ENCODE measurements at regions of chr5 and their contacts with region 1.

Region 1: GRCh38 chr5:154868702-154869101 is 10.3 kb downstream of the CNOT8 start:
- DNase-seq: no peak
- H3K4me3 ChIP-seq: no peak overlapping the region
- H3K27ac ChIP-seq: no peak overlapping the region
- H3K4me1 ChIP-seq: no peaks in the 10 kb centered on the region
- H3K27me3 ChIP-seq: no peaks in the 10 kb centered on the region; a peak in 1 of 7 replicates
- CTCF ChIP-seq: peak in 2 of 3 experiments; percentile 38 to 39; a peak in 3 of 4 replicates
- EP300 ChIP-seq: no peak
- POLR2A ChIP-seq: no peak
- RAD21 ChIP-seq: peak; percentile 56 to 68

Region 2: GRCh38 chr5:154857530-154858296 is 11.0 kb before region 1 on chr5:
- CTCF ChIA-PET with region 1: interaction called, 4 read pairs
- POLR2A ChIA-PET with region 1: interaction called, 13 read pairs
- DNase-seq: peak; percentile 79 to 93
- H3K4me3 ChIP-seq: peak overlapping the region; percentile 55 to 98 (median 72)
- H3K27ac ChIP-seq: peak overlapping the region; percentile 98
- H3K4me1 ChIP-seq: peaks cover 0 to 9% (median 5%) of the 10 kb centered on the region in 4 experiments; a peak in 6 of 7 replicates
- H3K27me3 ChIP-seq: no peaks in the 10 kb centered on the region
- CTCF ChIP-seq: no peak
- EP300 ChIP-seq: no peak
- POLR2A ChIP-seq: peak; percentile 67 to 86
- RAD21 ChIP-seq: no peak

Region 3: GRCh38 chr5:154878642-154879335 is 10.1 kb after region 1 on chr5:
- CTCF ChIA-PET with region 1: interaction called, 5 read pairs
- POLR2A ChIA-PET with region 1: interaction called, 12 read pairs
- DNase-seq: no peak
- H3K4me3 ChIP-seq: no peak overlapping the region
- H3K27ac ChIP-seq: no peak overlapping the region
- H3K4me1 ChIP-seq: no peaks in the 10 kb centered on the region
- H3K27me3 ChIP-seq: no peaks in the 10 kb centered on the region
- CTCF ChIP-seq: no peak
- EP300 ChIP-seq: no peak
- POLR2A ChIP-seq: no peak
- RAD21 ChIP-seq: no peak

Measured in H1 (cell line).